Kidney (tissue), 22 donors: ENCODE measurements at regions of chr16 and their contacts with region 1.

Region 1: GRCh38 chr16:8892101-8892575 is 10.0 kb downstream of the LITAFD start:
- DNase-seq: peak; percentile 31 to 73 (median 44)
- H3K4me3 ChIP-seq: no peak overlapping the region
- H3K27ac ChIP-seq: no peak overlapping the region
- H3K4me1 ChIP-seq: no peaks in the 10 kb centered on the region
- H3K27me3 ChIP-seq: no peaks in the 10 kb centered on the region
- CTCF ChIP-seq: no peak

Region 2: GRCh38 chr16:8958344-8959167 is 66.4 kb after region 1 on chr16:
- intact Hi-C with region 1: loop called (anchors 10 kb)
- DNase-seq: no peak
- H3K4me3 ChIP-seq: no peak overlapping the region
- H3K27ac ChIP-seq: peak overlapping the region in 1 of 2 donors; percentile 29
- H3K4me1 ChIP-seq: peaks cover 6 to 50% (median 22%) of the 10 kb centered on the region in 3 donors
- H3K27me3 ChIP-seq: no peaks in the 10 kb centered on the region
- CTCF ChIP-seq: no peak

Region 3: GRCh38 chr16:9134739-9135138 is 242.6 kb after region 1 on chr16:
- intact Hi-C with region 1: no loop called
- DNase-seq: peak in 4 of 5 donors; percentile 58 to 73 (median 64)
- H3K4me3 ChIP-seq: no peak overlapping the region
- H3K27ac ChIP-seq: no peak overlapping the region
- H3K4me1 ChIP-seq: peaks cover 0 to 5% (median 0%) of the 10 kb centered on the region in 3 donors
- H3K27me3 ChIP-seq: no peaks in the 10 kb centered on the region
- CTCF ChIP-seq: peak; percentile 26